ENCODE measurements at regions of chr5 and their contacts with region 1.

Region 1: DNA sequence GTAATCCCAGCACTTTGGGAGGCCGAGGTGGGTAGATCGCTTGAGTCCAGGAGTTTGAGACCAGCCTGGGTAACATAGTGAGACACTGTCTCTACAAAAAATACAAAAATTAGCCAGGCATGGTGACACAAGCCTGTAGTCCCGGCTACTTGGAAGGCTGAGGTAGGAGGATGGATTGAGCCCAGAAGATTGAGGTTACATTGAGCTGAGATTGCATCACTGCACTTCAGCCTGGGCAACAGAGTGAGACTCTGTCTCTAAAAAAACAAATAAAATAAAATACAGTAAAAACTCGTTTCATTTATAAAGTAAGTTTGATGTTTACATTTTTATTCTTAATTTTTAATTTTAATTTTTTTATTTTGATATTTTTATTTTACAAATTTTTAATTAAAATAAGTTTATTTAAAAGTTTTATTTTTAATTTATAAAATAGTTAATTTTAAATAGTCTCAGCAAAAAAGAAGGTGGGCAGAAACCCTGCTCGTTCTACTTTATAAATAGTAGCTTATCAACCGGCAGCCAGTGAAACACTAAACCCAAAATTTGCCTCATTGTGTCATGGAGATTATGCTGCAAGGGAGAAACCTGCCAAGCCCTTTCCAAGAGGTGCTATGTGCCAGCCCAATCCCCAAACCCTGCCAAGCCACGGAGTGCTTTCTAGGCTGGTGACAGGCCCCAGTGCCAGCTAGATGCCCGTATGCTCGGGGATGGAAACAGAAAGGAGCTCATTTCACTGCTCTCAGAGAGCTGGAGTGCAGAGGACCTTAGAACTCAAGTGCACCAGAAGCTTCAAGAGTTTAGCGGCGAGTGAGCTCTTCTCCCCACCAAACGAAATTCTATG is 38.9 kb downstream of the SERINC5 start:
- DNase-seq: peak; percentile 66
- ATAC-seq: peak; percentile 34
- H3K4me3 Mint-ChIP-seq: peak overlapping the region; percentile 77
- H3K27ac Mint-ChIP-seq: peak overlapping the region; percentile 88
- H3K4me1 Mint-ChIP-seq: peaks cover 71% of the 10 kb centered on the region
- H3K27me3 Mint-ChIP-seq: no peaks in the 10 kb centered on the region

Region 2: GRCh38 chr5:80191991-80192398 is 25.0 kb before region 1 on chr5:
- CTCF ChIA-PET with region 1: interaction called, 31 read pairs
- DNase-seq: peak; percentile 82
- ATAC-seq: peak; percentile 76
- H3K4me3 Mint-ChIP-seq: peak overlapping the region; percentile 67
- H3K27ac Mint-ChIP-seq: peak overlapping the region; percentile 96
- H3K4me1 Mint-ChIP-seq: peaks cover 80% of the 10 kb centered on the region
- H3K27me3 Mint-ChIP-seq: no peaks in the 10 kb centered on the region

Region 3: GRCh38 chr5:80227979-80228596 is 11.1 kb after region 1 on chr5:
- CTCF ChIA-PET with region 1: interaction called, 10 read pairs
- DNase-seq: no peak
- ATAC-seq: no peak
- H3K4me3 Mint-ChIP-seq: no peak overlapping the region
- H3K27ac Mint-ChIP-seq: no peak overlapping the region
- H3K4me1 Mint-ChIP-seq: peaks cover 42% of the 10 kb centered on the region
- H3K27me3 Mint-ChIP-seq: no peaks in the 10 kb centered on the region

Region 4: DNA sequence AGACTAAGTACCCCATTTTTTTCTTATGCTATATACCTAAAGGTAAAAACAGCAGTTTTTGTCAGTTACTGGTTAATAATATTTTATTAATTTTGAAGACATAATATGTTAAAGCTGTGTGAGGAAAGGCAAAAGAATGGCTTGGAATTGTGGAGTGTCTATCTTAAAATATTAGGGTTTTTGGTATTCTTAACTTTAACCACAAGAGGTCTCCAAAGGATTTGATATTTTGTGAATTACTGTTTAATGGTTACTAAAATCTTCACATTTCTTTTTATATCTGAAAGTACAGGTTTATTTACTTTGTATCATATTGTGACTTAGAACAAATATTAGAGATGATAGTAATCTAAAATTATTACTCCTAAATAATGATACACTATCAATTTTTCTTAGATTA is 469.8 kb after region 1 on chr5:
- CTCF ChIA-PET with region 1: no interaction called
- DNase-seq: no peak
- ATAC-seq: no peak
- H3K4me3 Mint-ChIP-seq: no peak overlapping the region
- H3K27ac Mint-ChIP-seq: no peak overlapping the region
- H3K4me1 Mint-ChIP-seq: peaks cover 24% of the 10 kb centered on the region
- H3K27me3 Mint-ChIP-seq: no peaks in the 10 kb centered on the region